CD4-positive, alpha-beta memory T cell (primary cell): ENCODE measurements at regions of chr12 and their contacts with region 1.

Region 1: GRCh38 chr12:55829967-55830600 is 697 bp upstream of the DNAJC14 start:
- DNase-seq: peak in 4 of 5 donors; percentile 18 to 55 (median 22)
- H3K4me3 ChIP-seq: peak overlapping the region; percentile 88 to 93
- H3K4me3 Mint-ChIP-seq: peak overlapping the region; percentile 95 to 99 (median 98)
- H3K27ac ChIP-seq: peak overlapping the region; percentile 59
- H3K27ac Mint-ChIP-seq: peak overlapping the region; percentile 89 to 97 (median 95)
- H3K4me1 ChIP-seq: peaks cover 54% of the 10 kb centered on the region
- H3K4me1 Mint-ChIP-seq: peaks cover 28 to 66% (median 41%) of the 10 kb centered on the region in 4 donors
- H3K27me3 ChIP-seq: no peaks in the 10 kb centered on the region
- H3K27me3 Mint-ChIP-seq: no peaks in the 10 kb centered on the region

Region 2: DNA sequence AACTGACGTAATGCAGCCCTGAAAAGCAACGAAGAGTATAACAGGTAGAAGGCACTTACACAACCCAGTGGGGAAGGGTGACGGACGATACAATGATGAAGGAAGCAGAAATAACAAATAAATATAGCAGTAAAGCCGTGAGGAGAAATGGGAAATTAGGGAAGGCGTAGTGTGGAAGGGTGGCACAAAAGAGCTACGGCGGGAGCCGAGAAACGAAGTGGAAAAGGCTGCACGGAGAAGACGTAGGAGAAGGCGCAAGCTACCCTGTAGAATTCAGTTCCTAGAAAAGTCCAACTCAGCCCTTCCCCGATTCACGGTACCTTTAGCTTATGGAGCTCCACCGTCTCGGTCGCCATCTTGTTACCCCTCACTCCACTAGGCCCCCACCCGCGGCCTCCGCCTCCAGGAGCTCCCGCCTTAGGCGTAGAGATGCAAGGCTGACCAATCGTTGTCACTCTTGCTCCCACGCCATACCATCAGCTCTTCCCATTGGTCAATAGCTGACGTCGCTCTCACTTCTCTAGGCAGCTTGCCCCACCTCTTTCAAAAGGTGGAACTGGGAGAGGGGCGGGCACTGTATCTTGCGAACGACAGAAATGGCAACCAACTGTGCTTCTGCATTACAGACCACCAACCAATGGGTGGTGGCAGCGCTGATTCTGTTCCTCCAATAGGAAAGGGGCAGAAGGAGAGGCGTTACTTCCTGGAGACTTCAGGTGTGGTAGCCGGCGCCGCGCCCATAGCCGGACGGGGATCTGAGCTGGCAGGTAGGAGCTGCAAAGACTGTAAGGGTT is 12.5 kb before region 1 on chr12 and contains the starts of genes ORMDL2 and SARNP:
- CTCF ChIA-PET with region 1: interaction called, 39 read pairs
- POLR2A ChIA-PET with region 1: interaction called, 203 read pairs
- intact Hi-C with region 1: loop called (anchors 1 kb)
- DNase-seq: peak; percentile 95 to 100 (median 99)
- H3K4me3 ChIP-seq: peak within 1 kb of the TSS; percentile 76 to 96
- H3K4me3 Mint-ChIP-seq: no peak within 1 kb of the TSS
- H3K27ac ChIP-seq: peak within 1 kb of the TSS; percentile 88
- H3K27ac Mint-ChIP-seq: no peak within 1 kb of the TSS
- H3K4me1 ChIP-seq: peaks cover 51% of the 10 kb centered on the region
- H3K4me1 Mint-ChIP-seq: peaks cover 23 to 36% (median 25%) of the 10 kb centered on the region in 4 donors
- H3K27me3 ChIP-seq: no peaks in the 10 kb centered on the region
- H3K27me3 Mint-ChIP-seq: no peaks in the 10 kb centered on the region
- total RNA-seq, gene ORMDL2: 42.6 to 44.4 TPM
- total RNA-seq, gene SARNP: 47.7 to 49.4 TPM

Region 3: DNA sequence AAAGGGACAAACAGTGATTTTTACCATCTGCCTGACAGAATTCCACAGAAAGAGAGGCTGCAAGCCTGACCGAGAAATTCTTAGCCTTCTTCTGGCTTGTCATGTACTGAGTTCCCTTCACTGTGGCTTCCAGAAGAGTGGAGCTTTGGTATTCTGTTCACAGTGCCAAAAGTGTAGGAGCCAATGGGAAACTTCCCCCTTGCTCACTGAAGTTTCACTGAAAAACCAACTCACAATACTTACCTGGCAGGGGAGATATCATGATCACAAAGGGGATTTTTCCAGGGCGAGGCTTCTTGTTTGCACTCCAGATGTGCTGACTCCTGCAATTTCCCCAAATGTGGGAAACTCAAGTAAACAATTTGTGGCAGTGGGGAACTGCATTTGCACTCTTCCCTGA is 44.4 kb after region 1 on chr12:
- CTCF ChIA-PET with region 1: no interaction called
- POLR2A ChIA-PET with region 1: no interaction called
- intact Hi-C with region 1: no loop called
- DNase-seq: no peak
- H3K4me3 ChIP-seq: no peak overlapping the region
- H3K4me3 Mint-ChIP-seq: no peak overlapping the region
- H3K27ac ChIP-seq: no peak overlapping the region
- H3K27ac Mint-ChIP-seq: no peak overlapping the region
- H3K4me1 ChIP-seq: no peaks in the 10 kb centered on the region
- H3K4me1 Mint-ChIP-seq: no peaks in the 10 kb centered on the region
- H3K27me3 ChIP-seq: no peaks in the 10 kb centered on the region
- H3K27me3 Mint-ChIP-seq: no peaks in the 10 kb centered on the region

Region 4: GRCh38 chr12:55932551-55932910 is 102.4 kb after region 1 on chr12:
- CTCF ChIA-PET with region 1: interaction called, 13 read pairs
- POLR2A ChIA-PET with region 1: interaction called, 136 read pairs
- intact Hi-C with region 1: loop called (anchors 1 kb)
- DNase-seq: peak; percentile 60 to 80 (median 61)
- H3K4me3 ChIP-seq: peak overlapping the region; percentile 87 to 95
- H3K4me3 Mint-ChIP-seq: peak overlapping the region; percentile 97 to 100 (median 99)
- H3K27ac ChIP-seq: peak overlapping the region; percentile 88
- H3K27ac Mint-ChIP-seq: peak overlapping the region; percentile 93 to 99 (median 95)
- H3K4me1 ChIP-seq: peaks cover 72% of the 10 kb centered on the region
- H3K4me1 Mint-ChIP-seq: peaks cover 46 to 90% (median 56%) of the 10 kb centered on the region in 4 donors
- H3K27me3 ChIP-seq: no peaks in the 10 kb centered on the region
- H3K27me3 Mint-ChIP-seq: no peaks in the 10 kb centered on the region

Region 5: GRCh38 chr12:55955800-55956508 is 125.9 kb after region 1 on chr12:
- CTCF ChIA-PET with region 1: no interaction called
- POLR2A ChIA-PET with region 1: interaction called, 14 read pairs
- intact Hi-C with region 1: no loop called
- DNase-seq: peak in 4 of 5 donors; percentile 26 to 66 (median 31)
- H3K4me3 ChIP-seq: no peak overlapping the region
- H3K4me3 Mint-ChIP-seq: no peak overlapping the region
- H3K27ac ChIP-seq: no peak overlapping the region
- H3K27ac Mint-ChIP-seq: peak overlapping the region; percentile 30 to 76 (median 69)
- H3K4me1 ChIP-seq: peaks cover 21% of the 10 kb centered on the region
- H3K4me1 Mint-ChIP-seq: peaks cover 13 to 28% (median 19%) of the 10 kb centered on the region in 4 donors
- H3K27me3 ChIP-seq: no peaks in the 10 kb centered on the region
- H3K27me3 Mint-ChIP-seq: no peaks in the 10 kb centered on the region